Activated T-helper 2 cell treated with anti-CD3 and anti-CD28 coated beads, Interferon-gamma antibody, Interleukin-2, Interleukin-4, amounts not matched to agents 10 μg/mL and 5 μg/mL and 100 μg/mL, durations not matched to agents 14 hours and 24 hours and 36 hours (primary cell): ENCODE measurements at regions of chr14 and their contacts with region 1.

Region 1: GRCh38 chr14:35292051-35292769 is at the start of gene PSMA6:
- DNase-seq: peak; percentile 99
- H3K4me3 Mint-ChIP-seq: peak within 1 kb of the TSS; percentile 99
- H3K27ac Mint-ChIP-seq: peak within 1 kb of the TSS; percentile 96
- H3K4me1 Mint-ChIP-seq: peaks cover 44% of the 10 kb centered on the region
- H3K27me3 Mint-ChIP-seq: no peaks in the 10 kb centered on the region
- total RNA-seq, gene PSMA6: 396 and 397 TPM in 2 replicates

Region 2: DNA sequence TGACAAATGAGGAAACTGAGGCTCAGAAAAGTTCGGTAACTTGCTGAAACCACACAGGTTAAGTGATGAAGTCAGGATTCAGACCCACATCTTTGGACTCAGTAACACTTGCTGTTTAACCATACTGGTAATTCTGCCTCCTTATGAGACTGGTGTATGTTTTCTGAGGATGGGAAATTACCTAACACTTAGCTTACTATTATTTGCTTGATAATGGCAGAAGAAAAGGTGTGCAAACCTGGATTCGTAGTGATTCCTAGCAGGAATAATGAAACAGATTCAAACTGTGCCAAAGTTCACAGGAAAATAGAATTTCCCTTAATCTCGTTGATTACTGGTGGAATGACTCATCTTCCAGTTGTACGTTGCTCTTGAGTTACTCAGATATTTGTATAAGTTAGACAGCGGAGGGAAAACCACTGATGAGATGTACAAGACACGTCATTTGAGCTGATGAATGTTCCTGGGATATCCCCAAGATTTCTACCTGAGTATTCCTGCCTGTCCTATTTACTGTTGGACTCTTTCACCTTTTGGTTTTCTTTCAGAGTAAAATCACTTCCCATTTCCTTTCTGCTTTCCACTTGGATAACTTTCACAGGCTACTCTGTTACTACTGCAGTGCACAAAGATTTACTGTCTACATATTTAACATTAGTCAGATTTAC is 132.3 kb before region 1 on chr14:
- intact Hi-C with region 1: loop called (anchors 5 kb)
- DNase-seq: no peak
- H3K4me3 Mint-ChIP-seq: no peak overlapping the region
- H3K27ac Mint-ChIP-seq: peak overlapping the region; percentile 54
- H3K4me1 Mint-ChIP-seq: peaks cover 45% of the 10 kb centered on the region
- H3K27me3 Mint-ChIP-seq: no peaks in the 10 kb centered on the region

Region 3: GRCh38 chr14:35254736-35255135 is 37.5 kb before region 1 on chr14:
- intact Hi-C with region 1: loop called (anchors 2 kb)
- DNase-seq: no peak
- H3K4me3 Mint-ChIP-seq: peak overlapping the region; percentile 5
- H3K27ac Mint-ChIP-seq: peak overlapping the region; percentile 30
- H3K4me1 Mint-ChIP-seq: peaks cover 43% of the 10 kb centered on the region
- H3K27me3 Mint-ChIP-seq: no peaks in the 10 kb centered on the region

Region 4: DNA sequence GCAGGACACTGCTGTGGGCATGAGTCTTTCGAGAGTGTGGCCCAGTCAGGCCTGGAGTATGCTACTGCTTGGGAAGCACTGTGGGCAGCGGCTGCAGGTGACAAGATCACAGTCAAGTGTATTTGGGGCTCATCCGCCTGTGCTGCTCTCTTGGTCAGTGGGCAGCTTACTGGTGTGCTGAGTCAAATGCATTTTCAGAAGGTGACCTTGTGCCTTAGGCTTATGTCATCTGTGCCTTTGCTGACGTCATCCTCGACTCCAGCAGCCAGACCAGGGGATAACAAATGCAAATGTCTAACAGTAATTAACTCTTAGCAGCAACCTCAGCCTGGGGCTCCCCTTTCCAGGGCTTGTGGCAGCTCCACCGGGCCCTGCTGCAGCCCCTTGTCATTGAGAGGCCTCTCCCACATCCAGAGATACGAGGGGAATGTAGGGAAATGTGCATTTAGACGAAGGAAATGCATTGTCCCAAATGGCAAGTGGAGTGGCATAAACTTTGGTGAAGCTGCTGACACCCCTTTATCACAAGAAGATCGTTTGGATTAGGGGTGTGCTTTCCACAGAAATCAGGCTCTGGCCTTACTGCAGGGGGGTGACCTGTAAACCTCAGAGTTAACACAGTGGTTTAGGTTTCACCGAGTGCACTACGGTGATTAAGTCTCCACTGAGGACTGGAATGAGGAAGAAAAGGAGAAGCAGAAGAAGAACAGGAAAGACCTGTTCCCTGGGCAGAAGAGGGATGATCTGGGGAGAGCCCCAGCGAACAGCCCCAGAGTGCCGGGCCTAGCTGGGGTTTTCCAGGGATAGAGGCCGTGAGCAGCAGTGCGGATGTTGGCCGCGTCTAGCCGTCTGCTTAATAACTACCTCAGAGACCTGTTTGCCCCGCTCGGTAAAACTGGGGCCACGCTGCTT is 39.7 kb after region 1 on chr14:
- intact Hi-C with region 1: loop called (anchors 1 kb)
- DNase-seq: no peak
- H3K4me3 Mint-ChIP-seq: no peak overlapping the region
- H3K27ac Mint-ChIP-seq: peak overlapping the region; percentile 96
- H3K4me1 Mint-ChIP-seq: peaks cover 32% of the 10 kb centered on the region
- H3K27me3 Mint-ChIP-seq: no peaks in the 10 kb centered on the region